ENCODE measurements at regions of chr12 and their contacts with region 1.

Region 1: DNA sequence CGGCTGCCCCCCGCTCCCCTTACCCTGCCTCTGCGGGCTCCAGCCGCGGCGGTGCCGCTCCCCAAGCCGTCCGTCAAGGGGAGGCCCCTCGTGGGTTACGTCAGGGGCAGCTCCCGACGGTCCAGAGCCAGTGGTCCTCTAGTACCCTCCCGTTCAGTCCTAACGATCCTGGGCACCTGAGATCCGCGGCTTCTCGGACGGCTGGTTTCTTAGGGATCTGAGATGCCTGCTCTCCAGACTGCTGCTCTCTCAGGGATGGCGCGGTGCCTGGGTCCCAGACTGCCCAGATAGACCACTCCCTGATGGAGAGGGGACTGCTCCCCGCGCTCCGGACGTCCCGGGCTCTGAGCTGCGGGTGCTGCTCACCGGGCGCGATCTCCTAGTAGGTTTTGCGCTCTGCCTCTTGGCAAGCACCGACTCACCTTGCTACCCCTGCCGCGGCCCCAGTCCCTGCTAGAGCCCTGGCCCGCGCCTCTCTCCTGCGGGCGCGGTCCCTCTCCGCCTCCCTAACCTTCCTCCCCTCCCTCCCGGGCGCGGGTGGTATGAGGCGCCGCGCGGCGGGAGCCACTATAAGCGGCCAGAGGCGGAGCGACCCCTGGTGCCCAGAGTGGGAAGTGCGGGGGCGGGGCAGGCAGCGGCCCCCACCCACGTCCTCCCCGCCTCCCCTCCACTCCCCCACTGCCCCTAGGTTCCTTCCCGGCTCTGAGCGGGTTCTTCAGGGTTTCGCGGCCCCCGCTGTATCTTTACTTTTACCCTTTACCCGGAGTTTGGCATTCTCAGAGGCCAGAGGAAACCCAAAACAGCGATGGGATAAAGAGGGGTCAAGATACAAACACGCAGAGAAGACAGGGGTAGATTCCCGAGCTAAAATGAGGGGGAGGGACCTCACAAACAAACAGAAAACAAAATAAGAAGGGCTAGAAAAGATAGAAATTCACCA is at the start of gene C1QL4:
- DNase-seq: peak; percentile 68 to 89 (median 80)
- H3K4me3 ChIP-seq: peak within 1 kb of the TSS; percentile 15
- H3K27ac ChIP-seq: no peak within 1 kb of the TSS
- H3K4me1 ChIP-seq: no peaks in the 10 kb centered on the region
- H3K27me3 ChIP-seq: no peaks in the 10 kb centered on the region
- CTCF ChIP-seq: peak; percentile 41 to 89 (median 68)
- EP300 ChIP-seq: no peak
- POLR2A ChIP-seq: no peak
- total RNA-seq, gene C1QL4: not detected

Region 2: GRCh38 chr12:49264738-49265515 is 72.0 kb before region 1 on chr12 and contains the start of gene TUBA1C:
- intact Hi-C with region 1: no loop called
- DNase-seq: peak; percentile 86 to 95 (median 91)
- H3K4me3 ChIP-seq: peak within 1 kb of the TSS; percentile 70
- H3K27ac ChIP-seq: peak within 1 kb of the TSS; percentile 52 to 66
- H3K4me1 ChIP-seq: peaks cover 10% of the 10 kb centered on the region
- H3K27me3 ChIP-seq: no peaks in the 10 kb centered on the region
- CTCF ChIP-seq: no peak
- EP300 ChIP-seq: no peak
- POLR2A ChIP-seq: peak; percentile 65
- total RNA-seq, gene TUBA1C: 51.9 to 122 (median 101) TPM

Region 3: GRCh38 chr12:49296034-49296835 is 40.7 kb before region 1 on chr12:
- intact Hi-C with region 1: loop called in 1 of 4 experiments (anchors 5 kb)
- DNase-seq: peak in 2 of 5 donors; percentile 44 to 60
- H3K4me3 ChIP-seq: no peak overlapping the region
- H3K27ac ChIP-seq: no peak overlapping the region
- H3K4me1 ChIP-seq: peaks cover 8% of the 10 kb centered on the region
- H3K27me3 ChIP-seq: peaks cover 5% of the 10 kb centered on the region
- CTCF ChIP-seq: peak in 1 of 3 donors; percentile 34
- EP300 ChIP-seq: no peak
- POLR2A ChIP-seq: no peak

Measured in ovary (tissue), 10 donors.